ENCODE measurements at regions of chr4 and their contacts with region 1.

Region 1: GRCh38 chr4:152021788-152022438 is 261.1 kb upstream of the GATB start:
- DNase-seq: no peak

Region 2: DNA sequence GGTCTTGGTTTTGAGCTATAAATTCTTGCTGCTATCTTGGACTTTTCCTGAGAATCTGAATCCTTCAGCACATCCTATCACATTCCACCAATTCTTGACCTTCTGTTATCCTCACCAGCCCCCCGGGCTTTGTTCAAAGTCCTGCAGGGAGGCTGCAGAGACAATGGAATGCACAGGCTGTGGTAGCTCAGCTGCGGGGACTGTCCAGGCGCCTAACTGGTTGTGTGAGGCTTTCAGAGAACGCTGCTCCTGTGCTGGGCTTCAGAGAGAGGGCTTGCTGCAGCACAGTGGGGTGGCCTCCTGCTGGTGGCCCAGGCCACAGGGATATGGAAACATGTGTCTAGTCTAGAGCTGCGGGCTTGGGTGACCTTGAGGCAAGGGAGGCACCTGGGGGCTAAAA is 64.8 kb before region 1 on chr4:
- intact Hi-C with region 1: loop called in 1 of 2 experiments (anchors 10 kb)
- DNase-seq: no peak

Region 3: DNA sequence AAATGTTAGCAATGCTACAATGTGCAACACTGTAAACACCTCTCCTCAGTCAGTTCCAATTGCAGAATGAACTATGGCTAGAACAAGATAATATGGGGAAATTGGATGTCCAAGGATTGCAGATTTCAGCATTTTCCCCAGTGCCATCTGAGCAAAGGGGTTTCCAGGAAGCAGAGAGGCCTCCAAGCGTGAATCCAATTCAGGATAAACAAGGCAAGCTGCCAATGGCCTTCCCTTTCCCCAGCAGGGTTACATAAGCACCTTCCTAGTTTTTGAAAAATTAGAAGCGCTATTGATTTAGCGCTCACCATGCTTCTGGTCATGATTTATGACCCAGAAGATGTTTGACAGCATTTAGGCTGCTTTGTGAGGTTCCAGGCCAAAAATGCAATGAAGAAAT is 38.1 kb before region 1 on chr4:
- intact Hi-C with region 1: no loop called
- DNase-seq: no peak

Region 4: GRCh38 chr4:152166567-152166966 is 144.7 kb after region 1 on chr4:
- intact Hi-C with region 1: loop called in 1 of 2 experiments (anchors 10 kb)
- DNase-seq: no peak

Measured in posterior vena cava (tissue), 2 donors.